PC-9 (cell line): ENCODE measurements at regions of chr9 and their contacts with region 1.

Region 1: DNA sequence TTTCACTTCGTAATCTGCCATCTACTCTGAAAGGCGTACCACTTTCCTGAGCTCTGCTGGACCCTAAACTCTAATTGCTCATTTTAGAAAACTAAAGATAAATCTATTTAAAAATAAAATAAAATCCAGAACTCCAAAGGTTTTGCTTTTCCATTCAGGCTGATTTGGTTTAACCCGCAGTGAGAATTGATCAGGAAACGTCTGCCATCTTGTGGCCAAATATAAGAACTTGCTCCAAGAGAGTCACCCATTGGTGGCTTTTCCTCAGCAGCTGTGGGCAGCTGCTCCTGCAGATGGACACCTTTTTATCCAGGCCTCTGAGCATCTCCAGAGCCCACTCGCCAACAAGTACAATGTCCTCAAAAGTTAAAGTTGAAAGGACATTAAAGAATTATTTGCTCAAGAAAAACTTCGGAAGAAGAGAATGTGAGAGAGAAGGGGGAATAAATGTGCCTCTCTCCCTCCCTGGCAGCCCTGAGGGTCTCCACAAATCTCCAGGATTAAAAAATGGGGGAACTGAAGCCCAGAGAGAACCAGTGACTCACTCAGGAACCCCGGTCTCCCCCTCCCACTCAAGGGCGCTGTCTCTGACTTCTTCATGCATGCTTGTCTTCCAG is 4.1 kb downstream of the SAXO1 start:
- DNase-seq: peak; percentile 12 to 36
- H3K4me3 ChIP-seq: no peak overlapping the region
- H3K27ac ChIP-seq: no peak overlapping the region
- H3K4me1 ChIP-seq: no peaks in the 10 kb centered on the region
- H3K27me3 ChIP-seq: no peaks in the 10 kb centered on the region
- CTCF ChIP-seq: peak; percentile 76

Region 2: DNA sequence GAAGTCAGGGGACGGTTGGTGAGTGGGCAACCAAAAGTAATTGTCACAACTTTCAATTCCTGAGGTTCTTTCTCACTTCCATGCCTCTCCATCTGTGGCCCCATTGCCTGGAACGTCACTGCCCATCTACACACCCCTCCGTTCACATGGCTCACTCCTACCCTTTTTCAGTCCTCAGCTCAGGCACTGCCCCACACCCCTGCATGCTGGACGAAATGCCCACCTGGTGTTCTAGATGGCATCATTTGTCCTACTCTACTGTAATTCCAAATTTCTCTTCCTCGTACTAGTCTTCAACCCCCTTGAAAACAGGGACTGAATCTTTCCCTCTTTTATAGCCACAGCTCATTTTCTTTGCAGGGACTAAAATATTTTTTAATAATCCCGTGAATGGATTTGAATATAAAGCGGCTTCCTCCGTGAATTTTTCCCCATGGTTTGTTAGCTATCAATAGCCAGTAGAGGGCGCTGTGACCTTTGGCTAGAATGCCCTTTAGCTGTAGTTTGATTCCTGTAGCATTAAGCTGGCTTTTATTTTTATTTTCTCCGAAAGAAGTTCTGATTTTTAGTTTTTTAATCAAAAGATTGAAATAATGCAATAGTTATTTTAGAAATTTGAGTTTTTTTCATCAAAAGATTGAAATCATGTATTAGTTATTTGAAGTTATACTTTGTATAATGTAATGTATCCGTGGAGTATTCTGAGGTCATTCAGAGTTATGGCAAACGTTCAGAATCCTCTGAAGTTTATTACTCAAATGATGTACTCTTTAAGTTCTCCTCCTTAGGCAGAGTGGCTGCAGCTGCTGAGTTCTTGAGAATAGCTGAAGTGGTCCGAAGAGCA is 1218.0 kb before region 1 on chr9:
- CTCF ChIA-PET with region 1: interaction called, 4 read pairs
- POLR2A ChIA-PET with region 1: no interaction called
- intact Hi-C with region 1: loop called (anchors 2 kb)
- DNase-seq: peak in 1 of 2 experiments; percentile 11
- H3K4me3 ChIP-seq: no peak overlapping the region
- H3K27ac ChIP-seq: no peak overlapping the region
- H3K4me1 ChIP-seq: no peaks in the 10 kb centered on the region
- H3K27me3 ChIP-seq: no peaks in the 10 kb centered on the region
- CTCF ChIP-seq: peak; percentile 86

Region 3: DNA sequence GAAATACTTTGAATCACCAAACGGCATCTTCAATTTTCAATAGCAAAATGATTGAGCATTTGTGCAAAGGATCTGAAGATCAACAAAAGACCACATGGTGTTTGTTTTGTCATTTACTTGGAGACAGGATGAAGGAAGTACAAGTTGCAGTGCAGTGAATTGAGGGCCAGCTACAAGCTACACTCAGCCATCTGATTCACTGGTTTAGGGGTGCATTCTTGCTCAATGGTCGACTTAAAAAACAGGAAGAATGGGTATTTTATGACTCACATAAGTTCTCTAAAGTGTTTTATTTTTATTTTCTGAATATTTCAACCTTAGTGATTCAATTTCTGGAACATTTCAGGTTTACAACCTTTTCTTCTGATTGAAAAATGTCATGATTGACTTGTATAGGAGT is 967.1 kb before region 1 on chr9:
- CTCF ChIA-PET with region 1: interaction called, 12 read pairs
- POLR2A ChIA-PET with region 1: no interaction called
- intact Hi-C with region 1: no loop called
- DNase-seq: no peak
- H3K4me3 ChIP-seq: no peak overlapping the region
- H3K27ac ChIP-seq: no peak overlapping the region
- H3K4me1 ChIP-seq: no peaks in the 10 kb centered on the region
- H3K27me3 ChIP-seq: no peaks in the 10 kb centered on the region
- CTCF ChIP-seq: no peak

Region 4: GRCh38 chr9:18255158-18255629 is 773.7 kb before region 1 on chr9:
- CTCF ChIA-PET with region 1: interaction called, 3 read pairs
- POLR2A ChIA-PET with region 1: no interaction called
- intact Hi-C with region 1: loop called (anchors 1 kb)
- DNase-seq: peak in 1 of 2 experiments; percentile 52
- H3K4me3 ChIP-seq: no peak overlapping the region
- H3K27ac ChIP-seq: no peak overlapping the region
- H3K4me1 ChIP-seq: no peaks in the 10 kb centered on the region
- H3K27me3 ChIP-seq: no peaks in the 10 kb centered on the region
- CTCF ChIP-seq: peak; percentile 92

Region 5: DNA sequence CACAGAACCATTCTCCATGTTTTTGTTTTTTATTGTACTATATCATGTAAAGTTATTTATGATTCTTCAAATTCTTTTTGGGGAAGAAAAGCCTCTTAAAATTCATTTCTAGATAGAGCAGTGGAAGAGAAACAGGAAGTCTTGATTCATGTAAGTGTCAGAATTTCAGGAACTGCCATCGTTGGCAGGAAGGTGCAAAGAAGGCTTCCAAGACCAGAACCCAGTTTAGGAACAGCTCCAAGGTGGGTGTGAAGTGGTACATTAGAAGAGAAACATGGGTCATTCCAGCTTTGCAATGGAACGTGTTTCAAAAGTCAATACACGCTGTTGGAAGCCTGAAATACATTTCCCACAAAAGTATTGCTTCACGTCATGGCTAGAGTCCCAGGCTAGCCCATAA is 10.7 kb before region 1 on chr9:
- CTCF ChIA-PET with region 1: no interaction called
- POLR2A ChIA-PET with region 1: no interaction called
- intact Hi-C with region 1: no loop called
- DNase-seq: no peak
- H3K4me3 ChIP-seq: no peak overlapping the region
- H3K27ac ChIP-seq: no peak overlapping the region
- H3K4me1 ChIP-seq: no peaks in the 10 kb centered on the region
- H3K27me3 ChIP-seq: no peaks in the 10 kb centered on the region
- CTCF ChIP-seq: no peak